ENCODE measurements at regions of chr15 and their contacts with region 1.

Region 1: DNA sequence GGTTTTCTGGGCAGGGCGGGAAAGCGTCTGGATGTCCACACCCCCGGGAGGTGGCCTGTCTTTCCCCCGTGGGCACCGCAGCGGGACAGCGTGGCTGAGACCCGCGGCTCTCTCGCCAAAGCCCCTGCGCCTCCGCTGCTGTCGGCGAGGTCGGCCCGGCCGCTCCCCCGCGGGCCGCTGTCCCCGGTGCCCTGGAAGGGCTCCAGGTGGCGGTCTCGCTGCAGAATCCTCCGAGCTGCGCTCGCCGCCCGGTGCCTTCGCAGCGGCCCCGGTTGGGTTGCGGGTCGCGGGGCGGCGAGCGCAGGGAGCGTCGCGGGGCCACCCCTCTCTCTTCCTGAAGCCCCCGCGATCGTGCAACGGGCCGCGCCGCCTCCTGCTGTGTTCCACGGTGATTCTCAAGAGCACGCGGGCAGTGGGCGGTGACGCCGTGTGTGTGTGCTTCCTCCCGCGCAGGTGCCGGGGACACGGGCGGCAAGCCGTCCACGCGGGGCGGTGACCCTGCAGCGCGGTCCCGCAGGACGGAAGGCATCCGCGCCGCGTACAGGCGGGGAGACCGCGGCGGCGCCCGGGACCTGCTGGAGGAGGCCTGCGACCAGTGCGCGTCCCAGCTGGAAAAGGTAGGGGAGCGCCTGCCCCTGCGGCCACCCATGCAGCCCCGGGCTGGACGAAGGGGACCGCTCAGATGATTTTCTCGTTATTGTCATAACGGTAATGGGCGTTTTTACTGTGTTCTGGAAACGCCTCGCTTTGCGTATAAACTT is 54.4 kb downstream of the LRRK1 start:
- DNase-seq: no peak
- H3K4me3 ChIP-seq: peak overlapping the region; percentile 14 to 63 (median 37)
- H3K27ac ChIP-seq: no peak overlapping the region
- H3K4me1 ChIP-seq: no peaks in the 10 kb centered on the region
- H3K27me3 ChIP-seq: peaks cover 0 to 7% of the 10 kb centered on the region in 2 donors
- CTCF ChIP-seq: no peak
- POLR2A ChIP-seq: no peak

Region 2: GRCh38 chr15:100308213-100308600 is 665.3 kb before region 1 on chr15:
- intact Hi-C with region 1: loop called (anchors 10 kb)
- DNase-seq: no peak
- H3K4me3 ChIP-seq: peak overlapping the region in 1 of 3 donors; percentile 44
- H3K27ac ChIP-seq: peak overlapping the region; percentile 50 to 83
- H3K4me1 ChIP-seq: no peaks in the 10 kb centered on the region
- H3K27me3 ChIP-seq: no peaks in the 10 kb centered on the region
- CTCF ChIP-seq: no peak
- POLR2A ChIP-seq: no peak